Heart right ventricle (tissue), 16 donors: ENCODE measurements at regions of chr1 and their contacts with region 1.

Region 1: GRCh38 chr1:174204697-174205308 is 45.5 kb downstream of the RABGAP1L start:
- DNase-seq: no peak
- ATAC-seq: peak in 3 of 8 donors; percentile 19 to 28 (median 22)
- H3K4me3 ChIP-seq: no peak overlapping the region
- H3K27ac ChIP-seq: peak overlapping the region in 5 of 10 donors; percentile 26 to 75 (median 47)
- H3K4me1 ChIP-seq: peaks cover 0 to 40% (median 14%) of the 10 kb centered on the region in 9 donors
- H3K27me3 ChIP-seq: no peaks in the 10 kb centered on the region
- CTCF ChIP-seq: no peak

Region 2: GRCh38 chr1:174074757-174075156 is 130.0 kb before region 1 on chr1:
- intact Hi-C with region 1: no loop called
- DNase-seq: no peak
- ATAC-seq: no peak
- H3K4me3 ChIP-seq: no peak overlapping the region
- H3K27ac ChIP-seq: no peak overlapping the region
- H3K4me1 ChIP-seq: peaks cover 0 to 5% (median 0%) of the 10 kb centered on the region in 9 donors
- H3K27me3 ChIP-seq: no peaks in the 10 kb centered on the region
- CTCF ChIP-seq: peak in 8 of 9 donors; percentile 19 to 65 (median 53)

Region 3: DNA sequence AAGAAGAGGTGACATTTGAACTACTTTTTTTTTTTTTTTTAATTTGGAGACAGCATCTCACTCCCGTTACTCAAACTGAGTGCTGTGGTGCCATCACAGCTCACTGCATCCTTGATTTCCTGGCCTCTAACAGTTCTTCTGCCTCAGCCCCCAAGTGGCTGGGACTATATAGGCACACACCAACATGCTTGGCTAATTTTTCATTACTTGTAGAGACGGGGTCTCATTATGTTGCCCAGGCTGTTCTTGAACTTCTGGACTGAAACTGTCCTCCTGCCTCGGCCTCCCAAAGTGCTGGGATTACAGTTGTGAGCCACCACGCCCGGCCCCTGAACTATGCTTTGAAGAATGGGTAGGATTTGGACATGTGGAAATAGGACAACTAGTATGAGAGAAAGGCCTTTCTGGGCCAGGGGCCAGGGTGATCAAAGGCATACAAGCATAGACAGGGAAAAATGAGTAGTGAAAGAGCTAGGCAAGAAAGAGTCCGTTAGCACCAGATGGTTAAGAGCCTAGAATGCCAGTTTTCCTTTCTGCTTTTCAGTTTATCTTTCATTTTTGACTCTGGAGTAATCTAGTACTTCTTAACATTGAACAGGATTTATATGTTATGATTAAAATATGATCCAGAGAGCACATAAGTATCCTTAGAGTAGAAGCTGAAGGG is 39.2 kb before region 1 on chr1:
- intact Hi-C with region 1: loop called in 2 of 10 experiments (anchors 5 kb)
- DNase-seq: peak in 1 of 2 donors; percentile 23
- ATAC-seq: peak in 6 of 8 donors; percentile 31 to 66 (median 50)
- H3K4me3 ChIP-seq: no peak overlapping the region
- H3K27ac ChIP-seq: peak overlapping the region in 9 of 10 donors; percentile 42 to 86 (median 72)
- H3K4me1 ChIP-seq: peaks cover 4 to 77% (median 39%) of the 10 kb centered on the region in 9 donors
- H3K27me3 ChIP-seq: no peaks in the 10 kb centered on the region
- CTCF ChIP-seq: no peak